Activated T-helper 1 cell treated with anti-CD3 and anti-CD28 coated beads, Interleukin-12 subunit alpha, Interleukin-12 subunit beta, Interleukin-2, Interleukin-4 antibody, amounts not matched to agents 30 ng/mL and 10 ng/mL and 1 ng/mL, durations not matched to agents 14 hours and 24 hours and 36 hours (primary cell): ENCODE measurements at regions of chr17 and their contacts with region 1.

Region 1: DNA sequence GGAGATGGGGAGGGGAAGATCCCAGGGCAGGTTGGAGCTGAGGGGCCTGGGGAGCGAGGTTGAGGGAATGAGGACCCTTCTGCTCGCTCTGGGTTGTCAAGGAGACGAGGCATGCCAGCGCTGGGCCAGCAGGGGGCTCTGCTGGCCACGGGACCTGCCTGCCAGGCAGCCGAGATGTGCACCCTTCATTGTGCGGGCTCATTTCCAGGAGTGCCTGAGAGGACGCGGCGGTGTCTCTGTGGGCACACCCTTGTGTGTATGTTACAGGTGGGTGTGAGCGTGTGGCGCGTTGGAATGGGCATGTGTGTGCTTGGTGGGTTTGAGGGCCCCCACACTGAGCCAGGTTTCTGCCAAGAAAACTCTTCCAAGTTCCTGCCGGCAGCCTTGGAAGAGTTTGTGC is 15.9 kb downstream of the ARHGAP23 start:
- DNase-seq: peak; percentile 24
- H3K4me3 Mint-ChIP-seq: no peak overlapping the region
- H3K27ac Mint-ChIP-seq: no peak overlapping the region
- H3K4me1 Mint-ChIP-seq: no peaks in the 10 kb centered on the region
- H3K27me3 Mint-ChIP-seq: peaks cover 13% of the 10 kb centered on the region

Region 2: GRCh38 chr17:38485146-38485468 is 41.0 kb after region 1 on chr17:
- intact Hi-C with region 1: loop called (anchors 1 kb)
- DNase-seq: no peak
- H3K4me3 Mint-ChIP-seq: no peak overlapping the region
- H3K27ac Mint-ChIP-seq: no peak overlapping the region
- H3K4me1 Mint-ChIP-seq: peaks cover 4% of the 10 kb centered on the region
- H3K27me3 Mint-ChIP-seq: peaks cover 6% of the 10 kb centered on the region